Heart left ventricle (tissue), 16 donors: ENCODE measurements at regions of chr6 and their contacts with region 1.

Region 1: DNA sequence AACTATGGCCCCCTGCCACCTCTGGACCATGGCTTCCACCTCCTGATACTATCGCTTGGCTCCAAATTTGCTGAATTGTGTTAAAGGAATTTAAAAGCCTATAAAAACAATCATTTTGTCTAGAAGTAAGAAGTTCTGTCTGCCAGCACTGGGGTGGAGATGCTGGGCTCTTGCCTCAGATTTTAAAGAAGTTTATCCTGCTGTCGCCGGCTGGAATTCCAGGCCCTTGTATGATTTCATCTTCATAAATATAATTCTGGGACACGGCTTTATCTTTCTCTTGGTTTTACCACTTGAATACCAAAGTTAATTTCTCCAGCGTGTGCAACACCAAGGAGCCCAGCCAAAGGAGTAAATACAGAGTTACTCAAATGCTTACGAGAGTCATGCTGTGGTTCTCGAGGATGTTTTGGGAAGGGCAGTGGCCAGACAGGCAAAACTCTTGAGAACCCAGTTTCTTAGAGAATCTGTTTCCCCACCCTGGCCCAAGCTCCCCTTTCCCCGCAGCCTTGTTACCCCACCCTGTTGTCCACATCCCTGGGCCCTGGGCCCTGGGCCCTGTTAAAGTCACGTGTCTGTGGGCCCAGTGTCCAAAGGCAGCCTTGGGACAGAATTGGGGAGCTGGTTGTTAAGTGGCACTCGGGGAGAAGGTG is 31.9 kb downstream of the C6orf89 start:
- DNase-seq: peak in 2 of 5 donors; percentile 51 to 63
- ATAC-seq: peak; percentile 2 to 71 (median 64)
- H3K4me3 ChIP-seq: no peak overlapping the region
- H3K27ac ChIP-seq: peak overlapping the region; percentile 53 to 84 (median 74)
- H3K4me1 ChIP-seq: peaks cover 0 to 47% (median 23%) of the 10 kb centered on the region in 12 donors
- H3K27me3 ChIP-seq: no peaks in the 10 kb centered on the region
- CTCF ChIP-seq: no peak
- POLR2A ChIP-seq: no peak

Region 2: GRCh38 chr6:36650848-36651478 is 266.7 kb before region 1 on chr6:
- intact Hi-C with region 1: no loop called
- DNase-seq: no peak
- ATAC-seq: peak in 2 of 4 donors; percentile 38 to 55
- H3K4me3 ChIP-seq: no peak overlapping the region
- H3K27ac ChIP-seq: no peak overlapping the region
- H3K4me1 ChIP-seq: peaks cover 0 to 25% (median 0%) of the 10 kb centered on the region in 12 donors
- H3K27me3 ChIP-seq: no peaks in the 10 kb centered on the region
- CTCF ChIP-seq: no peak
- POLR2A ChIP-seq: no peak

Region 3: DNA sequence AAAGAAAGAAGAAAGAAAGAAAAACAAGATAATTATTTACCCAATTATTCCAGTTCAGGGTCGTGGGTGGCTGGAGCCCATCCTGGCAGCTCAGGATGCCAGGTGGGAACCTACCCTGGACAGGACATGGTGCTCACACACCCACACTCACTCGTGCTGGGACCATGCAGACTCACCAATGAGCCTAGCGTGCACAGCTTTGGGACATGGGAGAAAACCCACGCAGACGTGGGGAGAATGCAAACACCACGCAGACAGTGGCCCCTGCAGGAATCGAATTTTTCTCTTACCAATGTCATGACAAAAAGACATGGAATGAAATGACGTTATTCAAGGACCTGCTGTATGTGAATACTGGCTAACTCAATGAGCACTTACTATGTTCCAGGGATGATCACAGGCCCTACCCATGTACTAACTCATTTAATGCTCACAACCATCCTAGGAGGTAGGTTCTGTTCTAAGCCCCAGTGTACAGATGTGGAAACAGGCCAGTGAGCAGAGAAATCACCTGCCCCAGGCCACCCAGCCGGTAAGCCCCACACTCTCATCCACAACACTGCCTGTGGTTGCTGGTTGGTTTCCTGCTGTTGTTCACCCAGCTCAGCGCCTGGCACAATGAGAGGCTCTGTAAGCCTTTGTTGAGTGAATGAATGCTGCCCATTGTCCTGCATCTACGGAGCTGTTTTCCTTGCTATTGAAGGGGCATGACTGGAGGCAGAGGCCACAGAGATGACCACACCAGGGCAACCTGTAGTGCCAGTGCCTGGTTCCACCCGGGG is 30.1 kb after region 1 on chr6:
- intact Hi-C with region 1: loop called in 1 of 10 experiments (anchors 1 kb)
- DNase-seq: peak in 1 of 5 donors; percentile 12
- ATAC-seq: no peak
- H3K4me3 ChIP-seq: no peak overlapping the region
- H3K27ac ChIP-seq: no peak overlapping the region
- H3K4me1 ChIP-seq: no peaks in the 10 kb centered on the region
- H3K27me3 ChIP-seq: no peaks in the 10 kb centered on the region
- CTCF ChIP-seq: no peak
- POLR2A ChIP-seq: no peak

Region 4: DNA sequence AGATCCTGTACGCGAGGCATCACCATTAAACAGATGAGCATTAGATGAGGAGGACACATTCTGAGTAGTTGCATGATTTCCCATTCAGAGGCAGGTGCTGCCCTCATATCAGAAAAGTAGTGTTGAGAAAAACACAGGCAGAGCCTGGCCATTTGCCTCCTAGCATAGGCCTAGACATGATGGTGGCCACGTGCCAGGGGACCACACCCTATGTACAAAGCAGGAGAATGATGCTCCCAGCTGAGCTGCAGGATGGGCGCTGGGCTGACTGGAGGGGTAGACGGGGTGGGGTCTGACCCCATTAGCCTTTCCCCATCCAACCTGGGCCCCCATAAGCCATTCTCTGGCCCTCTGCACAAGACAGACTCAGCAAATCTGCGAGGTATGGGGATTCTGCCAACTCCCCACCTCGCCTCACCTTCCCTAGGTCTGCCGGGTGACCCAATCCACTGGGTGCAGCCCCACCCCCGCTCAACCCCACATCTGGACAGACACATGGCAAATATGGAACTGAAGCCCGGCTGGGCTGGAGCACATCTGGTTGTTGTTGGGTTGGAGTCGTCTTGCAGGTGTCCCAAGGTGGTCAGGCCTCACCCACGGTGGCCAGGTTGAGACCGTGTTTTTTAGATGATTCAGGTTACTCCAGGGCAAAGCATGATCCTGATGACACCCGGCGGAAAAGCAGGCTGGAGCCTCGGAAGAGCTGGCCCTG is 50.8 kb after region 1 on chr6:
- intact Hi-C with region 1: loop called in 3 of 10 experiments (anchors 5 to 10 kb)
- DNase-seq: peak in 2 of 5 donors; percentile 38 to 73
- ATAC-seq: peak in 2 of 4 donors; percentile 3 to 17
- H3K4me3 ChIP-seq: no peak overlapping the region
- H3K27ac ChIP-seq: peak overlapping the region in 7 of 12 donors; percentile 10 to 68 (median 52)
- H3K4me1 ChIP-seq: peaks cover 7 to 86% (median 41%) of the 10 kb centered on the region in 12 donors
- H3K27me3 ChIP-seq: no peaks in the 10 kb centered on the region
- CTCF ChIP-seq: no peak
- POLR2A ChIP-seq: no peak